ENCODE measurements at regions of chr22 and their contacts with region 1.

Region 1: DNA sequence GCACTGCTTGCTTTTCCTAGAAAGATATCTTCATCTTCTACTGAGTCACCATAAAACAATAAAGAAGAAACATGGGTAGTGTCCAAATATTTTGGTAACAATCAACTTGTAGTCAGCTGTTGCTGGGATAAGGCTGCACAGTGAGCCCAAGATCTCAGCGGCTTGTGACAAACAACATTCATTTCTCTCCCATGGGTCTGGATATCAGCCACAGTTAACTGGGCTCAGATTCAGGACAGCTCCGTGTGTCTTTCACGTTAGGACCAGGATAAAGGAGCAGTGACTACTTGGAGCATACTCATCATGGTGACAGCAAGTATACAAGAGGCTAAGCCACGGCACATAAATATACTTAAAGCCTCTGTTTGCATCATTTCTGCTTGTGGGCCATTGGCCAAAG is 27.9 kb upstream of the GRK3 start:
- DNase-seq: no peak
- ATAC-seq: no peak
- H3K4me3 ChIP-seq: no peak overlapping the region
- H3K4me3 Mint-ChIP-seq: no peak overlapping the region
- H3K27ac ChIP-seq: no peak overlapping the region
- H3K27ac Mint-ChIP-seq: no peak overlapping the region
- H3K4me1 ChIP-seq: no peaks in the 10 kb centered on the region
- H3K4me1 Mint-ChIP-seq: no peaks in the 10 kb centered on the region
- H3K27me3 ChIP-seq: no peaks in the 10 kb centered on the region
- H3K27me3 Mint-ChIP-seq: no peaks in the 10 kb centered on the region
- CTCF ChIP-seq: no peak

Region 2: GRCh38 chr22:25582946-25583345 is 46.4 kb after region 1 on chr22:
- CTCF ChIA-PET with region 1: no interaction called
- POLR2A ChIA-PET with region 1: no interaction called
- intact Hi-C with region 1: loop called in 1 of 2 experiments (anchors 5 kb)
- DNase-seq: no peak
- ATAC-seq: no peak
- H3K4me3 ChIP-seq: no peak overlapping the region
- H3K4me3 Mint-ChIP-seq: no peak overlapping the region
- H3K27ac ChIP-seq: no peak overlapping the region
- H3K27ac Mint-ChIP-seq: no peak overlapping the region
- H3K4me1 ChIP-seq: no peaks in the 10 kb centered on the region
- H3K4me1 Mint-ChIP-seq: no peaks in the 10 kb centered on the region
- H3K27me3 ChIP-seq: no peaks in the 10 kb centered on the region
- H3K27me3 Mint-ChIP-seq: peaks cover 4% of the 10 kb centered on the region
- CTCF ChIP-seq: no peak